Left cardiac atrium (tissue), 4 donors: ENCODE measurements at regions of chr4 and their contacts with region 1.

Region 1: DNA sequence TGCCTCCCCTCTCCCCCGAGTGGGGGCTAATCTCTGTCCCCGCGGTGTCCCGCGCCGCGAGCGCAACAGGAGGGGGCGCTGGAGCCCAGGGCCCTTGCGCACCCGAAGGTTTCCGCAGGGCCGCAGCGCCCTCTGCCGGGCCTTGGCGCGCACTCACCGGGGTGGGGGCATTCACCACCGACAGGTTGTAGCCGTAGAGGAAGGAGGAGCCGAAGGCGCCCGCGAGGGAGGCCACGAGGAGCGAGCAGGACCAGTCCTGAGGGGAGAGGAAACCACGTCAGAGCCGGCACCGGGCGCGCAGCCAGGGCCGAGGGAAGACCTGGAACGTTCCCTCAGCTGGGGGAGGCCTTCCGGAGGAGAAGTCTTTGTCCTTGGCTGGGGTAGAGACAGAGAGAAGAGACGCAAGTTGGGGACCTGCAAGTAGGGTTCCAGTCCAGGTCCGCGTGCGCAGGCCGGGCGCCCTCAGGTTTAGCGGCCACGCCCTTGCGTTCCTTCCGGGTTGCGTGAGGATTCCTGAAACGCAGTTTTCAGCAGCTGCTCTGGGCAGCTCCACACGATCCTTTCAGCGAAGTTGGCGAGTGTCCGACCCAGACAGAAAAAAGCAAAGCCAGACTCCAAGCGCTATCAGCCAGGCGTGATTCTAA is 2.4 kb downstream of the SLC2A9 start:
- DNase-seq: peak; percentile 99
- ATAC-seq: peak; percentile 96 to 97

Region 2: DNA sequence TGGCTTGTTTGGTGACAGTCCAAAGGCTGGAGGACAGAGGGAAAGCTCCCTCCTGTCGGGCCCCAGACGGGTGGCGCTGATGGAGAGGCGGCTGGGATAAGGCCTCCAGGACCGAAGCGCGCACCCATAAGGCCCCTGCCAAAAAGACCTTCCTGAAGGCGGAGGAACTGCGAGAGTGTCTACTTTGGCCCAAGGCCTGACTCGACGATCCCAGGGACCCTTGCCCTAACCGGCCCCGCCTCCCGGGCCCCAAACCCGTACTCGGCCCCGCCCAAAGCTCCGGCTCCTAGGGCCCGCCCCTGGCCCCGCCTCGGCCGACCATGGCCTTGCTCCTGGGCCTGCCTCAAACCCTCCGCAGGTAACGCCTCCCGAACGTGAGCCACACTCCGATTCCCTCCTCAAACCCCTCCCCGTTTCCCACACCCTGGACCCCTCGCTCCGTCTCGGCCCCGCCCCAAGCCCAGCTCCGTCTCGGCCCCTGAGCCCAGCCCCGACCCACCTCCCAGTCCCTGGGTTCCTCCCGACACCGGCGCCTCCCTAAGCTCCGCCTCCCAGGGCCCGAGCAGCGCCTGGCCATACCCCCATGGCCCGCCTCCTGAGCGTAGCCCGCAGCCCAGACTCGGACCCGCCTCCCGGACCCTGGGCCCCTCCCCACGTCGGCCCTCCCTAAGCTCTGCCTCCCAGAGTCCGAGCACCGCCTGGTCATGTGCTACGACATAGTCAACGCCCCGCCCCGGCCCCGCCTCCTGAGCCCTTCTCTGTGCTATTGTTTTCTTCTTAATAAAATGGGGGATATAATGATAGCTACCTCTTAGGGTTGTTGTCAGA is 327.5 kb before region 1 on chr4:
- intact Hi-C with region 1: loop called in 1 of 2 experiments (anchors 10 kb)
- DNase-seq: peak; percentile 97
- ATAC-seq: peak; percentile 100

Region 3: DNA sequence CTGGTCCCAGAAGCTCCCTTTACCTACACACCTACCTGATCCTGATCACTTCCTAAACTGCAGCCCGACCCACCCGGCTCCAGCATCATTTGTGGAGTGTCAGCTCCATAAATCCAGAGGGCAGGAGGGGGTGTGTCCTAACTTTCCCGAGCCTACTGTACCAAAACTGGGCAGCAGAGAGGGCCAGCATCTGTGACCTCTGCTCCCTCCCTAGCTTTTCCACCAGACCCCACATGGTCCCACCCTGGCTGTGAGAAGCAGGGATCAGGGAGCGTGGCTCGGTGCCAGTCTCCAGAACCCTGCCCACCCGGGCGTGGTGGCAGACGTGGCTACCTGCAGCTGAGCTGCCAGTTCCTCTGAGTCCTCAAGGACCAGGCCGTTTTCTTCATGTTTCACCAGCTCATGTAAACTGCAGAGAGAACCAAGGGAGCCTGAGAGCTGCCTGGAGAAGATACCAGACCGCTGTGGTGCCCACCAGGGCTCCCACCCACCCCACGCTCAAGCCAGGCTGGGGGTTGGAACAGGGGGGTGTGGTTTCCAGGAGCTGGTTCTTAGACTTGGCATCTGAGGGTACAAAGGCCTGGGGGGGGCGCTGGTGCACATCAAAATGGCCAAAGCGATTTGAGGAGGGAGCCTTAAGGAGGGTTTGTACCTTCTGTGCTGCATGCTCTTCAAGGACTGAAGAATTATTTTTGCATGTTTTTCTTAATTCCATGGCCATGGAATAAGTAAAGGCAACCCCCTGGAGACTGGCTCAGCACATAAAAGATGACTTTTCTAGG is 314.2 kb before region 1 on chr4:
- intact Hi-C with region 1: loop called (anchors 10 kb)
- DNase-seq: no peak
- ATAC-seq: no peak

Region 4: GRCh38 chr4:9942139-9942538 is 76.8 kb before region 1 on chr4:
- intact Hi-C with region 1: no loop called
- DNase-seq: no peak
- ATAC-seq: no peak

Region 5: DNA sequence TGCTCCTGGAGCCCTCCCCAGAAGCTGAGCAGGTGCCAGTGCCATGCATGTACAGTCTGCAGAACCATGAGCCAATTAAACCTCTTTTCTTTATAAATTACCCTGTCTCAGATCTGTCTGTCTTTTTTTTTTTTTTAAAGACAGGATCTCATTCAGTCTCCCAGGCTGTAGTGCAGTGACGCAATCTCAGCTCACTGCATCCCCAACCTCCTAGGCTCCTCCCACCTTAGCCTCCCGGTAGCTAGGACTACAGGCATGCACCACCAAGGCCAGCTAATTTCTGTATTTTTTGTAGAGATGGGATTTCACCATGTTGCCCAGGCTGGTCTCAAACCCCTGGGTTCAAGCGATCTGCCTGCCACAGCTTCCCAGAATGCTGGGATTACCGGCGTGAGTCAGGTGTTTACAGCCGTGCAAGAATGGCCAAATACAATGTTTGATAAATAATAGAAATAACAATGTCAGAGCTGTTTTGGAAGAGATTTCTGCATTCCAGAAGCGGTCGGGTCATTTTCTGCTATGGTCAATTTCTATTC is 66.5 kb before region 1 on chr4:
- intact Hi-C with region 1: no loop called
- DNase-seq: no peak
- ATAC-seq: no peak

Region 6: GRCh38 chr4:10063544-10064300 is 44.8 kb after region 1 on chr4:
- intact Hi-C with region 1: loop called in 1 of 2 experiments (anchors 5 kb)
- DNase-seq: peak; percentile 80
- ATAC-seq: peak; percentile 95 to 99

Region 7: GRCh38 chr4:10089346-10089745 is 70.4 kb after region 1 on chr4:
- intact Hi-C with region 1: no loop called
- DNase-seq: peak; percentile 46
- ATAC-seq: no peak

Region 8: DNA sequence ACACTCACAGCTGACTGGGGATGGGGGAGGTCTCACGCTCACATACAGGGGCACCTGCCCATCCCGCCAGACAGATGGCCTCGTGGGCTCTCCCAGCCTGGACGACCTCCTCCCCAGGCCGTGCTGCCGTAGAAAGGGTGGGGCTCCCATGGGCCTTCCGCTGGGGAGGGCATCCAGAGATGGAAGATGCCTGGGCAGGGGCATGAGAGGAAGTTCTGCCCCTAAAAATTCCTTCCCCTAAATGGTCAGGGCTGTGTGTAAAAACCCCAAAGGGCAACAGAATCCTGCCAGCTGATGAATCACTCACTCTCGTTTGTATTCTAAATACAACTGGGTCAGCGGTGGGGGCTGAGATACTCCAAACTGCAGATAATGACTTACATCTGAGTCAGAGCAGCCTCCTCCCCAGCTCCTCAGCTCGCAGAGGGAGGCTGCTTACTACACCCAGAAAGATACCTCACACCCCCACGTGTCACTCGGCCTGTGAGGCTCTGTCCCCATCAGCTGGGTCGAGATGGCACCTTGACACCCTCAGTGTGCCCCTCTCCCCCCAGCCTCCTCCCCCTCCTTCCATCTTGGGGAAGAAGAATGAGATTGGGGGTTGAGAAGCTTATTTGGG is 87.6 kb after region 1 on chr4:
- intact Hi-C with region 1: no loop called
- DNase-seq: peak; percentile 88
- ATAC-seq: peak; percentile 79 to 92